ENCODE measurements at regions of chr12 and their contacts with region 1.

Region 1: DNA sequence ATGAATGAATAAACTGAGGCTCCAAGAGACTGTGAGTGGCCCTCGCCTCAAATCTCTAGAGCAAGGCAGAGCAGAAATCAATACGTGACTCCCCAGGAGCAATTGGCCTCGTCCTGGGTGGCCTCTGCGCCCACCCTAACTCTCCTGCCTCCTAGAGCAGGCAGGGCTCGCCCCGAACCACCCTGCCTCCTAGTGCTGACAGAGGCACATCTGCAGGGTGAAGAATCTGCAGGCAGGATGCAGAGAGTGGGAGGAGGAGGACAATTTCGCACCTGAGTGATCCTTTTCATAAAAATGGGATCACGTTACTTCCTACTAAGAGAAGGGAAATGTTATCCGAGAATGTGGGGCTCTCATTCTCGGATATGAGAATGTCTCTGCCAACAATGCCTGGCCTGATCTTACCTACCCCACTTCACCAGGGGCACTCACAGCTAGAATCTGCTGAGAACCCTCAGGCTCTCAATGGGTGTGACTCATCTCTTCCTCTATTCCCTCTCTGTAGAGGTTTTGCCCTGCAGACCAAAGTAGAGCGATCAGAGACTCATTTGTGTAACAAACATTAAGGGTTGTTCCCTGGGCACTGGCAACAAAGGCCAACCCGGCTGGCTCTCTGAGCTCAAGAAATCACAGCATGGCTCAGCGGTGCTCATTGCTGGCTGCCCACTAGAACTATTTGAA is 61.7 kb upstream of the BCL2L14 start:
- DNase-seq: peak; percentile 86
- H3K4me3 Mint-ChIP-seq: peak overlapping the region; percentile 76
- H3K27ac Mint-ChIP-seq: peak overlapping the region; percentile 95
- H3K4me1 Mint-ChIP-seq: peaks cover 85% of the 10 kb centered on the region
- H3K27me3 Mint-ChIP-seq: no peaks in the 10 kb centered on the region

Region 2: DNA sequence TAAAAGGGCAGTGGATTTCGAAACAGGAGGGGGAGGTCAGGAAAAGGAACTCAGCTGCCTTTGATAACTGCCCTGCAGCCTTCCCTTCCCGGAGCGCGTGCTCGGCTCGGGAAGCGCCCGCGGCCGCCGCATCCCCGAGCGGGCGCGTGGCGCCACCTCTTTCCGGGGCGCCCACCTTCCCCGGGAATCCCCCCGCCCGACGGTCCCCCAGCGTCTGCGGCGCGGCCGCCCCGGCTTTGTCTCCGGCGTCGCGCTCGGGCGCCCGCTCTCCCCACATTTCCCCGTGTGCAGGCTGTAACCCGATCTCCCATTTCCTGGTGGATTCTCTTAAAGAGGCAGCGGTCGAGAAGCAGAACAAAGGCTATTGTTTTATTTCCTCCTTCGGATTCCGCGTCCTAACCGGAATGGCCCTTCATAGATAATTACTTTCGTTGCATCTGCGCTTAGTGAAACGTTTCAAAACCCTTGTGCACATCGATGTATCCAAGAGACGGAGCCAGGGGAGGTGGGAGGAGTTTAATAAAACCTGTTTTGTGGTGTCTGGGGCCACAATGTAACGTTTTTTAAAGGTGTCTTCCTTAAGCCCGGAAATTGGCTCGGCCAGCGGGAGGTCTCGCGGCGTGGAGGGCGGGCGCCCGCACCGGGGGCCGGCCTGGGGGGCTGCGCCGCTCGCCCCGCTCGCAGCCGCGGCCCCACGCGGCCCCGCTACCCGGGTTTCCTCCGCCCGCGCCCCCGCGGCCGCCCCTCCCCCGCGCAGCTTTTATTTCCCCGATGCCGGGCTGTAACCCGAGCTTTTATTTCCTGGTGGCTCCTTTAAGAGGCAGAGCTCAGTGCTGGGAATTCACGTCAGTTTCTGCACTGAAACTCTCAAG is 360.0 kb before region 1 on chr12 and contains the start of gene ETV6:
- CTCF ChIA-PET with region 1: interaction called, 16 read pairs
- POLR2A ChIA-PET with region 1: interaction called, 31 read pairs
- intact Hi-C with region 1: loop called (anchors 1 kb)
- DNase-seq: peak; percentile 85
- H3K4me3 Mint-ChIP-seq: peak within 1 kb of the TSS; percentile 87
- H3K27ac Mint-ChIP-seq: peak within 1 kb of the TSS; percentile 98
- H3K4me1 Mint-ChIP-seq: peaks cover 28% of the 10 kb centered on the region
- H3K27me3 Mint-ChIP-seq: no peaks in the 10 kb centered on the region
- total RNA-seq, gene ETV6: 55.3 to 57.5 TPM

Region 3: GRCh38 chr12:11780521-11781101 is 228.5 kb before region 1 on chr12:
- CTCF ChIA-PET with region 1: interaction called, 4 read pairs
- POLR2A ChIA-PET with region 1: interaction called, 24 read pairs
- intact Hi-C with region 1: loop called (anchors 1 kb)
- DNase-seq: peak; percentile 34
- H3K4me3 Mint-ChIP-seq: no peak overlapping the region
- H3K27ac Mint-ChIP-seq: peak overlapping the region; percentile 89
- H3K4me1 Mint-ChIP-seq: peaks cover 83% of the 10 kb centered on the region
- H3K27me3 Mint-ChIP-seq: no peaks in the 10 kb centered on the region

Region 4: GRCh38 chr12:11877869-11878780 is 130.9 kb before region 1 on chr12:
- CTCF ChIA-PET with region 1: no interaction called
- POLR2A ChIA-PET with region 1: interaction called, 4 read pairs
- intact Hi-C with region 1: loop called (anchors 2 kb)
- DNase-seq: peak; percentile 37
- H3K4me3 Mint-ChIP-seq: no peak overlapping the region
- H3K27ac Mint-ChIP-seq: peak overlapping the region; percentile 55
- H3K4me1 Mint-ChIP-seq: peaks cover 51% of the 10 kb centered on the region
- H3K27me3 Mint-ChIP-seq: no peaks in the 10 kb centered on the region

Region 5: GRCh38 chr12:11949738-11950411 is 59.2 kb before region 1 on chr12:
- CTCF ChIA-PET with region 1: no interaction called
- POLR2A ChIA-PET with region 1: no interaction called
- intact Hi-C with region 1: no loop called
- DNase-seq: no peak
- H3K4me3 Mint-ChIP-seq: no peak overlapping the region
- H3K27ac Mint-ChIP-seq: no peak overlapping the region
- H3K4me1 Mint-ChIP-seq: peaks cover 18% of the 10 kb centered on the region
- H3K27me3 Mint-ChIP-seq: peaks cover 1% of the 10 kb centered on the region

Region 6: GRCh38 chr12:11998944-11999315 is 10.1 kb before region 1 on chr12:
- CTCF ChIA-PET with region 1: interaction called, 3 read pairs
- POLR2A ChIA-PET with region 1: interaction called, 13 read pairs
- intact Hi-C with region 1: no loop called
- DNase-seq: no peak
- H3K4me3 Mint-ChIP-seq: no peak overlapping the region
- H3K27ac Mint-ChIP-seq: peak overlapping the region; percentile 82
- H3K4me1 Mint-ChIP-seq: peaks cover 33% of the 10 kb centered on the region
- H3K27me3 Mint-ChIP-seq: no peaks in the 10 kb centered on the region

Region 7: GRCh38 chr12:12474931-12475795 is 466.1 kb after region 1 on chr12:
- CTCF ChIA-PET with region 1: no interaction called
- POLR2A ChIA-PET with region 1: no interaction called
- intact Hi-C with region 1: no loop called
- DNase-seq: peak; percentile 86
- H3K4me3 Mint-ChIP-seq: peak overlapping the region; percentile 63
- H3K27ac Mint-ChIP-seq: peak overlapping the region; percentile 99
- H3K4me1 Mint-ChIP-seq: peaks cover 82% of the 10 kb centered on the region
- H3K27me3 Mint-ChIP-seq: no peaks in the 10 kb centered on the region

Region 8: GRCh38 chr12:12505544-12506495 is 496.7 kb after region 1 on chr12:
- CTCF ChIA-PET with region 1: no interaction called
- POLR2A ChIA-PET with region 1: no interaction called
- intact Hi-C with region 1: loop called (anchors 5 kb)
- DNase-seq: peak; percentile 63
- H3K4me3 Mint-ChIP-seq: peak overlapping the region; percentile 63
- H3K27ac Mint-ChIP-seq: peak overlapping the region; percentile 95
- H3K4me1 Mint-ChIP-seq: peaks cover 57% of the 10 kb centered on the region
- H3K27me3 Mint-ChIP-seq: no peaks in the 10 kb centered on the region